ENCODE measurements at regions of chr1 and their contacts with region 1.

Region 1: DNA sequence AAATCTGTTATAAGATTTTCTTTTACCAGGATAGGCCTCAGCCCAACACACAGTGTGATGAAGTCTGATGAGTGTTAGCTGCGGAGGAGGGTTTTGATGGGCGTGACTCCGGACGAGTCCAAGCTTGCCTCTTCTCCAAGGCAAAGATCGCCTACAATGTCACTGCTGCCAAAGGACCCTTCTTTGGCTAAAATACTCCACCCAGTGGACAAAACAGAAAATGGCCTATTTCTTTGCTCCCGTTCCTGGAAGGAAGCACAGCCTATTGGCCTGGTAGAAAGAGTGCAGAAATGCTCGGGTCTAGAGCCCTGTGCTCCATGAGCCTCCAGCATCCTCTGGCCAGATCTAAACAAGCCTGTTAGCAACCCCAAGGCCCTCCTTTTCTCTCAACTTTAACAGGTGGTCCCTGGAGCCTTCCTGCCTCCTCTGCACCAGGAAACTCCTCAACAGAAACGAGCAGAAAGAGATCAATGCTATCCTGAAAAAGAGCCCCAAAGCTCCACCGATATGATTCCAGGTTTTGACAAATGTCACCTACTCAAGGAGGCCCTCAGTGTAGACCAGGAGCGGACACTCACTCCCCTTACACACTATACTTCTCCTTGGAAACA is 3.4 kb upstream of the CASQ2 start:
- DNase-seq: peak; percentile 73
- H3K4me3 ChIP-seq: no peak overlapping the region
- H3K27ac ChIP-seq: no peak overlapping the region
- H3K4me1 ChIP-seq: no peaks in the 10 kb centered on the region
- H3K27me3 ChIP-seq: peaks cover 0 to 13% of the 10 kb centered on the region in 2 experiments
- CTCF ChIP-seq: peak; percentile 58 to 69
- POLR2A ChIP-seq: no peak

Region 2: GRCh38 chr1:114819869-114820268 is 952.1 kb before region 1 on chr1:
- CTCF ChIA-PET with region 1: no interaction called
- POLR2A ChIA-PET with region 1: no interaction called
- dilution Hi-C with region 1: no loop called
- intact Hi-C with region 1: no loop called
- DNase-seq: no peak
- H3K4me3 ChIP-seq: no peak overlapping the region
- H3K27ac ChIP-seq: no peak overlapping the region
- H3K4me1 ChIP-seq: no peaks in the 10 kb centered on the region
- H3K27me3 ChIP-seq: no peaks in the 10 kb centered on the region
- CTCF ChIP-seq: no peak
- POLR2A ChIP-seq: no peak

Region 3: DNA sequence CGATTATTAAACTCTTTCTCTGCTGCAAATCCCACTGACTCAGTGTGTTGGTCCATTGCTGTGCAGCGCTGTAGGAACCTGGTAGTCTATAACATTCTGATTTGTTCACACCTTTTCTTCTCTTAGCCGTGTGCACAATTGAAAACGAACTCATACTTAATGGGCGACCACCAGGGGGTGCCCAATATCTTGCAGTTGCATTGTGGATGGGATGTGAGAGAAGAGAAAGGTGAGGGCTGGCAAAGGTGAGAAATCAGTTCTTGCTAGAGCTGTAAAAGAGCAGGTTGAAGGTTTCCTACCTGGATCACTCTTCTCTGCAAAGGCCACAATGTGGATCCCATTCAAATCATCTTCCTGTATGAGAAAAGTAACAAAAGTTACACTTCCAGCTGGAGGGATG is 54.4 kb before region 1 on chr1:
- CTCF ChIA-PET with region 1: interaction called, 15 read pairs
- POLR2A ChIA-PET with region 1: no interaction called
- dilution Hi-C with region 1: no loop called
- intact Hi-C with region 1: loop called (anchors 1 kb)
- DNase-seq: peak; percentile 30
- H3K4me3 ChIP-seq: no peak overlapping the region
- H3K27ac ChIP-seq: no peak overlapping the region
- H3K4me1 ChIP-seq: no peaks in the 10 kb centered on the region
- H3K27me3 ChIP-seq: peaks cover 2 to 16% of the 10 kb centered on the region in 2 experiments
- CTCF ChIP-seq: peak; percentile 41 to 56
- POLR2A ChIP-seq: no peak

Region 4: DNA sequence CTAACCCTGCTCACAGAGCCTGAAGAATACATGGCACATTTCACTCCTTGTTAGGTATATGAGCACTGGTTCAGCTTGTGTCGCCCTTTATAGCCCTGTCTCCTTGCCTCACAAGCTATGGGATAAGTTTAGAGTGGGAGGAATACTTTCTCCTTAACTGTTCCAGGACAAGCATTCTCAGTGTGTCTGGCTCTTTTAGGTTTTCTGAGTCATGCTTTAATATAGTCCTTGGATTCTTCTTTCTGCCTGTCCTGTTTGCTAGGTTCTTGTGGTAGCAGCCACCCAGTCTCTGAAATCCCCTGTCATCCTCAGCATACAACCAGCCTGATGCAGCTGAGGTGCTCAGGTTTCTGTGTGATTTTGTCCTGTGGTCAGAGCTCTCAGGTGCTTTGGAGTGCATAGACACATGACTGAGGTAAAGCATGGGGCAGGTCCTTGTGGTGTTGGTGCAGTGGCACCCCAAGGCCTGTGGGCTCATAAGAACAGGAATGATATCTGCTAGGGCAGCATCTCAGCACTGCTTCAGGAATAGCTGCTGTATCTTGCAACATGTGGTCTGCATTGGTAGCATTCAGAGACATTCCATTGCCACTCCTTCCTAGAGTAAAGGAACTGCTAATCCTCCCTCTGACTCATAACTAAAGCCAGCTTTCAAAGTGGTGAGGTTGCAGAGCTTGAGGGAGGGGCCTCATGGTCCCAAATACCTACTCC is 10.8 kb after region 1 on chr1:
- CTCF ChIA-PET with region 1: interaction called, 11 read pairs
- POLR2A ChIA-PET with region 1: no interaction called
- dilution Hi-C with region 1: no loop called
- intact Hi-C with region 1: no loop called
- DNase-seq: no peak
- H3K4me3 ChIP-seq: no peak overlapping the region
- H3K27ac ChIP-seq: no peak overlapping the region
- H3K4me1 ChIP-seq: no peaks in the 10 kb centered on the region
- H3K27me3 ChIP-seq: peaks cover 0 to 1% of the 10 kb centered on the region in 2 experiments
- CTCF ChIP-seq: no peak
- POLR2A ChIP-seq: no peak